Natural killer cell (primary cell): ENCODE measurements at regions of chr11 and their contacts with region 1.

Region 1: GRCh38 chr11:3109921-3110706 is 52.9 kb upstream of the CARS1 start:
- DNase-seq: peak; percentile 51 to 69
- ATAC-seq: peak; percentile 80 to 87 (median 80)
- H3K4me3 ChIP-seq: no peak overlapping the region
- H3K4me3 Mint-ChIP-seq: peak overlapping the region; percentile 13
- H3K27ac ChIP-seq: peak overlapping the region; percentile 6
- H3K27ac Mint-ChIP-seq: peak overlapping the region; percentile 77 to 79
- H3K4me1 ChIP-seq: peaks cover 29% of the 10 kb centered on the region
- H3K4me1 Mint-ChIP-seq: peaks cover 38 to 59% of the 10 kb centered on the region in 2 donors
- H3K27me3 ChIP-seq: no peaks in the 10 kb centered on the region
- H3K27me3 Mint-ChIP-seq: no peaks in the 10 kb centered on the region
- CTCF ChIP-seq: peak; percentile 76

Region 2: GRCh38 chr11:3159281-3160190 is 49.4 kb after region 1 on chr11:
- intact Hi-C with region 1: loop called (anchors 5 kb)
- DNase-seq: no peak
- ATAC-seq: no peak
- H3K4me3 ChIP-seq: peak overlapping the region; percentile 24
- H3K4me3 Mint-ChIP-seq: peak overlapping the region; percentile 93
- H3K27ac ChIP-seq: peak overlapping the region; percentile 46
- H3K27ac Mint-ChIP-seq: peak overlapping the region; percentile 89 to 93
- H3K4me1 ChIP-seq: peaks cover 99% of the 10 kb centered on the region
- H3K4me1 Mint-ChIP-seq: peaks cover 78 to 92% of the 10 kb centered on the region in 2 donors
- H3K27me3 ChIP-seq: no peaks in the 10 kb centered on the region
- H3K27me3 Mint-ChIP-seq: no peaks in the 10 kb centered on the region
- CTCF ChIP-seq: no peak

Region 3: GRCh38 chr11:3217676-3218482 is 107.8 kb after region 1 on chr11:
- intact Hi-C with region 1: loop called (anchors 1 kb)
- DNase-seq: no peak
- ATAC-seq: no peak
- H3K4me3 ChIP-seq: no peak overlapping the region
- H3K4me3 Mint-ChIP-seq: no peak overlapping the region
- H3K27ac ChIP-seq: no peak overlapping the region
- H3K27ac Mint-ChIP-seq: no peak overlapping the region
- H3K4me1 ChIP-seq: peaks cover 15% of the 10 kb centered on the region
- H3K4me1 Mint-ChIP-seq: peaks cover 7 to 23% of the 10 kb centered on the region in 2 donors
- H3K27me3 ChIP-seq: peaks cover 2% of the 10 kb centered on the region
- H3K27me3 Mint-ChIP-seq: peaks cover 13 to 27% of the 10 kb centered on the region in 2 donors
- CTCF ChIP-seq: no peak

Region 4: GRCh38 chr11:3914805-3915204 is 804.7 kb after region 1 on chr11:
- intact Hi-C with region 1: no loop called
- DNase-seq: peak in 1 of 2 donors; percentile 68
- ATAC-seq: peak; percentile 54 to 80 (median 72)
- H3K4me3 ChIP-seq: no peak overlapping the region
- H3K4me3 Mint-ChIP-seq: peak overlapping the region; percentile 53
- H3K27ac ChIP-seq: peak overlapping the region; percentile 22
- H3K27ac Mint-ChIP-seq: peak overlapping the region; percentile 61 to 81
- H3K4me1 ChIP-seq: peaks cover 39% of the 10 kb centered on the region
- H3K4me1 Mint-ChIP-seq: peaks cover 69 to 75% of the 10 kb centered on the region in 2 donors
- H3K27me3 ChIP-seq: no peaks in the 10 kb centered on the region
- H3K27me3 Mint-ChIP-seq: no peaks in the 10 kb centered on the region
- CTCF ChIP-seq: no peak